Naive thymus-derived CD8-positive, alpha-beta T cell (primary cell): ENCODE measurements at regions of chr2 and their contacts with region 1.

Region 1: DNA sequence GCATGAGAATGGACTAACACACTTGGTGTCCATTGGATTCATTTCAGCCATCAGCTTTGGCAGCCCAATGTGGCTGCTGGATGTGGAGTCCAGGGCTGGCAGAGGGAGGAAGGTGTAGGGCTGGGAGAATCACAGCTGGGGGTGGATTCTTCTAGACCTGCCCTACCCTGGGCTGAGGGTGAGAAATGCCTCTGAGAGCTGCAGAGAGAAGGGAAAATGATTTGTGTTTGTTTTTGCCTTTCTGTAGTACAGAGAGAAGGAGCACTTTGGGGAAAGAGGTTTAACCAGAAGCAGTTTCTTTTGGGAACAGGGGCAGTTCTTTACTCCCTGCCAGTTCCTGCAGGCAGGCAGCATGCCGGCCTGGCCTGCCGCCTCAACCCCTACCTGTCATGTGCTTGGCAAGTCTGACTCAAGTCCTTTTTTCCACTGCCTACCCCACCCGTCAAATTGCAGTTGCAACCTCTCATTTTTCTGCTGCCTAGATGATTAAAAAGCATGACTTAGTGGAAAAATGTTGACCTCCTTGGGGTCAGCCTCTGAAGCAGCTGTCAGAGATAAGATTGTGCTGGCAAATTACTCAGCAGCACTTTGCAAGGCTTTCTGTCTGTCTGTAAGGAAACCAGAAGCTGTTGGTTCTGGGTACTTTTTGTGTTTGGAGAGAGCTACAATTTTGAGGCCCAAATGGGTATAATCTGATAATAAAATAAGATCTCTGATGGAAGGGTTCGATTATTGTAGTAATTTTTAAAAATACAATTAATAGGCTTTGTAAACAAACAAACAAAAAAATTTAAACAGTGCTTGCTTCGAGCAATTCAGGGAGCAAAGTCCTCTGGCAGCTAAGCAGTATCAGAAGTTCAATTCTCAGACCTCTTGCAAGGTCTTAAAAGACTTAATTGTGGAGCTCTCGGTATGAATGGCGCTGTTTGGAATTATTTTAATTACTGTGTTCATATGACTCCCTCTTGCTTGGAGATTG is 21.7 kb downstream of the LBH start:
- DNase-seq: peak in 5 of 10 donors; percentile 18 to 66 (median 45)
- ATAC-seq: peak; percentile 22 to 41
- H3K4me3 Mint-ChIP-seq: peak overlapping the region; percentile 56 to 87 (median 78)
- H3K27ac Mint-ChIP-seq: peak overlapping the region; percentile 91 to 98 (median 96)
- H3K4me1 Mint-ChIP-seq: peaks cover 58 to 97% (median 96%) of the 10 kb centered on the region in 4 donors
- H3K27me3 Mint-ChIP-seq: no peaks in the 10 kb centered on the region

Region 2: DNA sequence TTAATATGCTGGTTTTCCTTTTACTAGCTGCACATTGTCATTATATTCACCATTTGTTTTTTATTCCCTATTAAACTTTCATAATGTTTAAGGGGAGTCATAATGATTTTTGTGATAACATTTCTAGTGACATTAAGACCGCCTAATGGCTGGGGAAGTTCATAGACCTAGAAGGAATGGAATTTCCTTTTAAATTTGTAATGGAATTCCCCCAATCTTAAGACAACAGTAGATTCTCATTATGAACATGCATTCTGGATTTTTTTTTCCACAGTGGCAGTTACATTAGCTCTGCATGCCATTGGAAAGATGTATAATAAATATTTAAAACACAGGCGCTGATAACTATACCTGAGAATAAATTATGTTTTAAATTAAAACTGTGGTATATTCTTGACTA is 97.8 kb before region 1 on chr2:
- POLR2A ChIA-PET with region 1: no interaction called
- DNase-seq: no peak
- ATAC-seq: no peak
- H3K4me3 Mint-ChIP-seq: no peak overlapping the region
- H3K27ac Mint-ChIP-seq: peak overlapping the region in 1 of 10 donors; percentile 86
- H3K4me1 Mint-ChIP-seq: peaks cover 28 to 72% (median 58%) of the 10 kb centered on the region in 4 donors
- H3K27me3 Mint-ChIP-seq: no peaks in the 10 kb centered on the region

Region 3: DNA sequence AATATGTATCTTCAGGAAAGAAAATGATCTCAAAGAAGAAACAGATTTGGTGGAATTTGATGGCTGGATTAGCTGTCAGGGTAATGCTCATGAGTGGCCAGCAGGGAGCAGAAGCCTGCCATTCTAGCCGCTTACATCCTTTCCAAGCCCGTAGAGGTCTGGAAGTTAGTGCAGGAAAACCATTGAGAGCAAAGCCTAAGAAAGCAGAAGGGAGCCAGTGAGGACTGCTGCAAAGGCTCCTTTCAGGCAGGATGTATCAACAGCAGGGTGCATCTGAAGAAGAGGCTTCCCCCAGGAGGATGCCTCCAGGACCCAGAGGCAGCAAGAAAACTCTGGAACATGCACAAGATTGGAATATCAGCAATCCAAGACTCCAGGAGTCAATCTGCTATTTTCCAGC is 44.6 kb before region 1 on chr2:
- POLR2A ChIA-PET with region 1: interaction called, 16 read pairs
- DNase-seq: peak in 8 of 10 donors; percentile 11 to 64 (median 36)
- ATAC-seq: peak; percentile 21 to 69
- H3K4me3 Mint-ChIP-seq: peak overlapping the region; percentile 19 to 79 (median 58)
- H3K27ac Mint-ChIP-seq: peak overlapping the region in 9 of 10 donors; percentile 81 to 95 (median 93)
- H3K4me1 Mint-ChIP-seq: peaks cover 16 to 30% (median 25%) of the 10 kb centered on the region in 4 donors
- H3K27me3 Mint-ChIP-seq: no peaks in the 10 kb centered on the region

Region 4: DNA sequence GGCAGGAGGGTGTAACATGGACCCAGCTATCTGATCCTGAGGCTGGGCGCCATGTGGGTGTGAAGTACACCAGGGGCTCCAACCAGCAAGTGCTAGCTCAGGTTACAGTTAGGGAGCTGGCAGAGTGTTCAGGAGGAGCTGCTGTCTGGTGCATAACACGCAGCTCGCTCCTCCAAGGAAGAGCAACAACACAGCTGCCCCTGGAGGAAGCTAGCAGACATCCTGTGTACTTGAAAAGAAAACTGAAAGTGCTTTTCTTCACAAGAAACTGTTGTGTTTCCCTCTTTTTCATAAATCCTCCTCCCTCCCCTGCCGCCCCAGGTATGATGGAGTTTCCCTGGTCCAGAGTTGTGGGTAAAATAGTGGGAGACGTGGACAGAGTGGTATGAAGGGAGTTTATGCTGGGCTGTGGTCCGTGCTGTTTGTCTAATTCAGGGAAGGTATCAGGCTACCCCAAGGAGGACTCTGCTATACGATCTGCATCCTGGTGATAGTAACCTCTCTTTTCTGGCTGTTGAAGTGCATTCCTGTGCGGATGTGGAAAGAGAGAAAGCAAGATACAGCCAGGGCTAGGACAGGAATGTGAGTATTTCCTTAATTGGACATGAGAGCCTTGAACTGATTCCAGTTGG is 27.8 kb before region 1 on chr2:
- POLR2A ChIA-PET with region 1: interaction called, 697 read pairs
- DNase-seq: peak; percentile 29 to 74 (median 40)
- ATAC-seq: peak; percentile 78
- H3K4me3 Mint-ChIP-seq: peak overlapping the region; percentile 89 to 99 (median 95)
- H3K27ac Mint-ChIP-seq: peak overlapping the region; percentile 97 to 100 (median 99)
- H3K4me1 Mint-ChIP-seq: peaks cover 41 to 87% (median 84%) of the 10 kb centered on the region in 4 donors
- H3K27me3 Mint-ChIP-seq: no peaks in the 10 kb centered on the region

Region 5: GRCh38 chr2:30239308-30239985 is 13.6 kb before region 1 on chr2:
- POLR2A ChIA-PET with region 1: interaction called, 697 read pairs
- DNase-seq: peak; percentile 57 to 87 (median 78)
- ATAC-seq: peak; percentile 55 to 79
- H3K4me3 Mint-ChIP-seq: peak overlapping the region; percentile 84 to 99 (median 95)
- H3K27ac Mint-ChIP-seq: peak overlapping the region; percentile 87 to 100 (median 95)
- H3K4me1 Mint-ChIP-seq: peaks cover 58 to 94% (median 91%) of the 10 kb centered on the region in 4 donors
- H3K27me3 Mint-ChIP-seq: no peaks in the 10 kb centered on the region

Region 6: DNA sequence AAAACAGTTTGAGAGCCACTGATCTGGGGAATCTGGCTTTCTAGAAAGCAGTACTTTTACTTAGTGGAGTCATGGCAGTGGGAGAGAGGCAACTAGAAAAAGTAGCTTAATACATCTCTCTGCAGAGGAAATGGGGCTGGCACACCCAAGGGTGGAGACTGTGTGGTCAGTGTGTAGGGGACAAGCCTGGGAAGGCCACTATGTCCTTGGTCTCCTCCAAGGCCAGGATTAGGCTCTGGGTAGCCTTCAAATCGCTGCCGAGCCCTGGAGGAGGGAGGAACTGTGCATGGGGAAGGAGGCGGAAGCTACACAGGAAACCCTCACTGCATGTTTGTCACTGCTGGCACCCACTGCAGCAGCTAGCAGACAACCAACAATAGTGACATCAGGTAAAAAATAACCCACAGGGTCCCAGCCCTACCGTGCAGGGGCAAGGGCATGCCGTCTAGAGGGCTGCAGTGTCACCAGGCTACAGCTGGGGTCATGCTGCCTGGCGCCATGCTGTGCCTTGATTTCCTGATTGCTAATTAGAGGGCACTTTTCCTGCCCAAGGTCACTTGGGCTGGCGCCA is 13.1 kb after region 1 on chr2:
- POLR2A ChIA-PET with region 1: interaction called, 49 read pairs
- DNase-seq: peak; percentile 35 to 83 (median 68)
- ATAC-seq: peak; percentile 88 to 97
- H3K4me3 Mint-ChIP-seq: peak overlapping the region; percentile 64 to 90 (median 85)
- H3K27ac Mint-ChIP-seq: peak overlapping the region; percentile 90 to 99 (median 98)
- H3K4me1 Mint-ChIP-seq: peaks cover 37 to 96% (median 90%) of the 10 kb centered on the region in 4 donors
- H3K27me3 Mint-ChIP-seq: no peaks in the 10 kb centered on the region

Region 7: GRCh38 chr2:30293303-30293921 is 40.4 kb after region 1 on chr2:
- POLR2A ChIA-PET with region 1: no interaction called
- DNase-seq: no peak
- ATAC-seq: no peak
- H3K4me3 Mint-ChIP-seq: peak overlapping the region in 1 of 10 donors; percentile 41
- H3K27ac Mint-ChIP-seq: peak overlapping the region in 3 of 10 donors; percentile 11 to 78 (median 61)
- H3K4me1 Mint-ChIP-seq: peaks cover 13 to 64% (median 18%) of the 10 kb centered on the region in 4 donors
- H3K27me3 Mint-ChIP-seq: no peaks in the 10 kb centered on the region

Region 8: GRCh38 chr2:30527859-30528258 is 274.8 kb after region 1 on chr2:
- POLR2A ChIA-PET with region 1: no interaction called
- DNase-seq: no peak
- ATAC-seq: no peak
- H3K4me3 Mint-ChIP-seq: no peak overlapping the region
- H3K27ac Mint-ChIP-seq: no peak overlapping the region
- H3K4me1 Mint-ChIP-seq: peaks cover under 1 to 19% (median 7%) of the 10 kb centered on the region in 4 donors
- H3K27me3 Mint-ChIP-seq: no peaks in the 10 kb centered on the region